CD14-positive monocyte (primary cell): ENCODE measurements at regions of chr12 and their contacts with region 1.

Region 1: DNA sequence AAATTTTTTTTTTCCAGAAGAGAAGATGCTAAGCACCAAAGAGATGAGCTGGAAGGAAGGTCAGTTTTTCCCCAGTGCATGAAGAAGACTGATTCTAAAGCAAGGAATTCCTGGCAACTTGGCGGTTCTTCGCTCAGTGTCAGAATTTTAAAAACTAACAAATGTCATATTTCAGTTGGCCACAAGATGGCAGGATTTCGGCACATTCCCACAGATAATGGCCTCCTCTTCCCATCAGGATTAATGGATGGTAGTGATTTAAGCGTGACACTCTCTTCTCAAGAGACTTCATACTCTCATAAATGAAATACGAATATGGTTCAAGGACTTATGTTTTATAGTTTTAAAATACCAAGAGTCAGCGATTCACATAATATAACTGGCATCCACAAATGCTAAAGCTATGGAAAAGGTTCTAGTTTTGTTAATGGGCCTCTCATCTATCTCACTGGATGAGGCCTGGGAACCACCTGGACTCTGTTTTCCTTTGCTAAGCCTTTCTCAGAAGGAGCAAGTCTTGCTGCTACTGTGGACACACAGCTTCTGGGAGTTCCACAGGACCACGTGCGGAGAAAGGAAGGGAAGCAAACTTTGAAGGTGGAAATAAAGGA is 46.1 kb upstream of the PTPRO start:
- DNase-seq: peak in 2 of 3 donors; percentile 7 to 10
- H3K4me3 ChIP-seq: no peak overlapping the region
- H3K4me3 Mint-ChIP-seq: peak overlapping the region in 1 of 2 donors; percentile 11
- H3K27ac ChIP-seq: no peak overlapping the region
- H3K27ac Mint-ChIP-seq: no peak overlapping the region
- H3K4me1 ChIP-seq: no peaks in the 10 kb centered on the region
- H3K4me1 Mint-ChIP-seq: peaks cover 7% of the 10 kb centered on the region
- H3K27me3 ChIP-seq: peaks cover 2 to 12% of the 10 kb centered on the region in 2 donors
- H3K27me3 Mint-ChIP-seq: peaks cover 8 to 28% (median 16%) of the 10 kb centered on the region in 3 donors
- CTCF ChIP-seq: peak; percentile 78

Region 2: DNA sequence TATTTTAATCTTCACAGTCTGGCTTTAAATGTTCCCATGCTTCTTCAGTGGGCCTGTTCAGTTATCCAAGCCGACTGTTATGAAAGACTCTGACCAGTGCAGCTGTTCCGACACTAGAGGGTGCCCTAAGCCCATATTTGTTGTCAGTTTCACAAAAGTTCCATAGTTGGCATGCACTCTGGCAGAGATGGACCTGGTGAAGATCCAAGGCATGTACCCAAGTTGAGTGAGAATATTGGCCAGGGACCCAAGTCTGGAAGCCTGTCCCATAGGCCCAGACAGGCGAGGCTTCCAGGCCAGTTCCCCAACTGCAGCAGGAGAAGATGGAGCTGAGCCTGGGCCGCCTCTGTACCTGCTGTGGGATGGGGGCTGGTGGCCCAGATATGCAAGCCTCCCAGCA is 552.4 kb before region 1 on chr12:
- intact Hi-C with region 1: loop called in 1 of 2 experiments (anchors 10 kb)
- DNase-seq: peak; percentile 27 to 47 (median 37)
- H3K4me3 ChIP-seq: no peak overlapping the region
- H3K4me3 Mint-ChIP-seq: no peak overlapping the region
- H3K27ac ChIP-seq: no peak overlapping the region
- H3K27ac Mint-ChIP-seq: no peak overlapping the region
- H3K4me1 ChIP-seq: no peaks in the 10 kb centered on the region
- H3K4me1 Mint-ChIP-seq: no peaks in the 10 kb centered on the region
- H3K27me3 ChIP-seq: no peaks in the 10 kb centered on the region
- H3K27me3 Mint-ChIP-seq: peaks cover 3 to 5% (median 3%) of the 10 kb centered on the region in 3 donors
- CTCF ChIP-seq: peak; percentile 75

Region 3: DNA sequence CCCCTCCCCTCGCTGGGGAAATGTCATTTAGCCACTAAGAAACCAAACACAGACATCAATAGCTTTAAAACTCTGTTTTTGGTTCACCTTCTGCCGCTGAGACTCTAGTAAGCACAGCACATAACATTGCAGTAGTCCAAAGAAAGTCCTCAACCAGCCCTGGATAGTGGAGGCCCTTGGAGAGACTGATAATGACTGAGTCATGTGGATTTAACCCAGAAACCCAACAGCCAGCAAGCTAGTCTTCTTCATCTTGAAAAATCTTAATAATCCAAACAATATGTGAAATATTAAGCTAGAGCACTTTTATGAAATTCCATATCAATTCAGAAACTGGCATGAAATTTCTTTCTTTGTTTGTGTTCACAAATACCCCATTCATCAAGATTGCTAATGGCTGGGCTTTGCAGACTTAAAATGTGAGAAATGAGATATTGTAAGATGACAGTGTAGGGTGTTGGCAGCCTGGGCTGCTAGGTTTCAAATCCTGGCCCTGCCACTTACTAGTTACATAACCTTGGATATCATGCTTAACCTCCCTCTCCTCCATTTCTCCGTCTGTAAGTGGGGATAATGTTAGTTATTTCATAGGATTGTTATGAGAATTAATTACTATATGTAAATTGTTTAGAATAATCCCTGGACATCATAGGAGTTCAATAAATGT is 95.0 kb before region 1 on chr12:
- intact Hi-C with region 1: no loop called
- DNase-seq: no peak
- H3K4me3 ChIP-seq: no peak overlapping the region
- H3K4me3 Mint-ChIP-seq: no peak overlapping the region
- H3K27ac ChIP-seq: no peak overlapping the region
- H3K27ac Mint-ChIP-seq: no peak overlapping the region
- H3K4me1 ChIP-seq: no peaks in the 10 kb centered on the region
- H3K4me1 Mint-ChIP-seq: no peaks in the 10 kb centered on the region
- H3K27me3 ChIP-seq: no peaks in the 10 kb centered on the region
- H3K27me3 Mint-ChIP-seq: peaks cover 0 to 12% (median 2%) of the 10 kb centered on the region in 3 donors
- CTCF ChIP-seq: no peak

Region 4: DNA sequence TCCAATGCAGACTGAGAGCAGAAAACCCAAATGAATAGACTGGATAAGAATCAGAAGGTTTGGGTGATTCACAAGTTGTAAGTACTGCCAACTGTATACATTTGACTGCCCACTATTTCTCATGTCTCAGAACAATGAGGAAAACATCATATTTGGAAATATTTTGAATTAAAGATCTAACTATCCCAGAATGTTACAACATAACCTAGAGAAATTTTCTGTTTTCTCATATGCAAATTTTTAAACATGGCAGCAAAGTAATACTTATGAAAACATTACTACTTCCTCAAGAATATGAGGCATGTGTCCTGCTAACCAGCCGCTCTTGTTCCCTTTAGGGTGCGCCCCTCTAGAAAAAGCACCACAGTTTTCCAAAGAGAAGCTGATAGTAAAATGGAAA is 226.0 kb after region 1 on chr12:
- intact Hi-C with region 1: no loop called
- DNase-seq: no peak
- H3K4me3 ChIP-seq: no peak overlapping the region
- H3K4me3 Mint-ChIP-seq: no peak overlapping the region
- H3K27ac ChIP-seq: no peak overlapping the region
- H3K27ac Mint-ChIP-seq: no peak overlapping the region
- H3K4me1 ChIP-seq: peaks cover 0 to 9% of the 10 kb centered on the region in 2 donors
- H3K4me1 Mint-ChIP-seq: peaks cover 9% of the 10 kb centered on the region
- H3K27me3 ChIP-seq: peaks cover 0 to 2% of the 10 kb centered on the region in 2 donors
- H3K27me3 Mint-ChIP-seq: peaks cover 0 to 11% (median 3%) of the 10 kb centered on the region in 3 donors
- CTCF ChIP-seq: no peak

Region 5: GRCh38 chr12:15515010-15515409 is 238.8 kb after region 1 on chr12:
- intact Hi-C with region 1: loop called in 1 of 2 experiments (anchors 10 kb)
- DNase-seq: no peak
- H3K4me3 ChIP-seq: no peak overlapping the region
- H3K4me3 Mint-ChIP-seq: no peak overlapping the region
- H3K27ac ChIP-seq: no peak overlapping the region
- H3K27ac Mint-ChIP-seq: no peak overlapping the region
- H3K4me1 ChIP-seq: no peaks in the 10 kb centered on the region
- H3K4me1 Mint-ChIP-seq: no peaks in the 10 kb centered on the region
- H3K27me3 ChIP-seq: peaks cover 0 to 2% of the 10 kb centered on the region in 2 donors
- H3K27me3 Mint-ChIP-seq: peaks cover 6 to 23% (median 8%) of the 10 kb centered on the region in 3 donors
- CTCF ChIP-seq: no peak

Region 6: GRCh38 chr12:15584366-15585041 is 308.3 kb after region 1 on chr12:
- intact Hi-C with region 1: loop called in 1 of 2 experiments (anchors 10 kb)
- DNase-seq: peak; percentile 45 to 68 (median 63)
- H3K4me3 ChIP-seq: no peak overlapping the region
- H3K4me3 Mint-ChIP-seq: no peak overlapping the region
- H3K27ac ChIP-seq: no peak overlapping the region
- H3K27ac Mint-ChIP-seq: no peak overlapping the region
- H3K4me1 ChIP-seq: no peaks in the 10 kb centered on the region
- H3K4me1 Mint-ChIP-seq: no peaks in the 10 kb centered on the region
- H3K27me3 ChIP-seq: no peaks in the 10 kb centered on the region
- H3K27me3 Mint-ChIP-seq: peaks cover 0 to 1% (median under 1%) of the 10 kb centered on the region in 3 donors
- CTCF ChIP-seq: peak; percentile 88

Region 7: DNA sequence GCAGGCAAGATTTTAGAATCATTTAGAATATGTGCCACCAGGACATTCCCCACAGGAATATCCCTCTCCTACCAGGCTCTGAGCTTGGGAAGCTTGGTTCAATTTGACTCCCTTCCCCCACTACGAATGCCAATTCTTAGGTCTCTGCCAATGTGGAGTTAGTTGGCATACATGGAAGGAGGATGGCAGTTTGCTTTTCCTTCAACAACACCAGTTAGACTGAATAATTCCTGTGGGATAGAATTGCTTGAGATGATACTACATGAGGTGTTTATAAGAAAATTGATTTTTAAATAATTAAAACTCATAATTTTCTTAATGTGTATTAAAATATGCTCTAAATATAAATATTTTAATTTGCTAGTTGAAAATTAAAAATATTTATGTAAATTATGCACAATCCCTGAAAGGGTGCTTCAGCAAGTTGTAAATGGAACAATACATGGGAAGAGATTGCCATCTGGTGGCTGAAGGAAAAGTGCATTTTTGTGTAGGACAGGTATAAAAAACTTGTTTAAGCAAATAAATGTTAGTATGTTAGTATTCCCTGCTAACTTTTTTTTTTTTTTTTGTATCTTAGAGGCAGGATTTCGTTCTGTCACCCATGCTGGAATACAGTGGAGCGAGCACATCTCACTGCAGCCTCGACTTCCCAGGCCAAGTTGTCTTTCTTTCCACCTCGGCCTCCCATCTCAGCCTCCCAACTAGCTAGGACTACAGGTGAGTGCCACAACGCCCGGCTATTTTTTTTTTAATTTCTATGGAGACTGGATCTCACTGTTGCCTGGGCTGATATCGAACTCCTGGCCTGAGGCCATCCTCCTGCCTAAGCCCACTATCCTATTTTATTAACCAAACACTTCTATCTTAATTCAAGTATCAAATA is 580.1 kb after region 1 on chr12:
- intact Hi-C with region 1: loop called in 1 of 2 experiments (anchors 10 kb)
- DNase-seq: peak; percentile 41 to 60 (median 57)
- H3K4me3 ChIP-seq: no peak overlapping the region
- H3K4me3 Mint-ChIP-seq: no peak overlapping the region
- H3K27ac ChIP-seq: no peak overlapping the region
- H3K27ac Mint-ChIP-seq: no peak overlapping the region
- H3K4me1 ChIP-seq: no peaks in the 10 kb centered on the region
- H3K4me1 Mint-ChIP-seq: peaks cover 3% of the 10 kb centered on the region
- H3K27me3 ChIP-seq: no peaks in the 10 kb centered on the region
- H3K27me3 Mint-ChIP-seq: peaks cover 0 to 2% (median 0%) of the 10 kb centered on the region in 3 donors
- CTCF ChIP-seq: peak; percentile 91